Mammary epithelial cell (primary cell): ENCODE measurements at regions of chr12 and their contacts with region 1.

Region 1: DNA sequence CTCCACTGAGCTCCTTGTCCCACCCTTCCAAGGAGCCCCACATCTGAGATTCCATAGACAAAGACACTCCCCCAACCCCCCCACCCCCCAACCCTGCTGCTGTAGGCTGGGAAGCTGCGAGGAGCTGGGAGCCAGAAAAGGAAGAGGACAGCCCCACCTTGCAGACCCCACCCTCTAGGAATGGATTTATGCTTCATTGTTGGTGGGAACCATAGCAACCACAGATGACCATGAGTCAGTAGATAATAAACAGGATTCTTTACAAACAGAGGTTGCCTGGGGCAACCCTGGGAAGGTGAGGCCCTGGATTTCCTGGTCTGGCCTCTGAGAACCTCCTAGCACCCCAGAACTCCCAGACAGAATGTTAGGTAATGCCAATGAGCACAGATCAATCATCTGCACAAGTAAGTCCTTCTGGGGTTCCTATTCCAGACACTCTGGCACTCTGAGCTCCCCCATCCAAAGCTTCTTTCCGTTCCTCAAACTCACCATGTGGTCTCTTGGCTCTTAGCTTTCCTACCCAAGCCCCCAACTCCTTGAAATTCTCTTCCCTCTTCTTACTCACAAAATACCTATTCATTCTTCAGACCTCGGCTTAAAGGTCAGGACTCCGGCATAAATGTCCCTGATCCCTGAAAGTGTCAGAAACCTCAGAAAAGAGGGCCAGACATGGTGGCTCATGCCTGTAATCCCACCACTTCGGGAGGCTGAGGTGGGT is 15.2 kb upstream of the PLEKHG6 start:
- DNase-seq: peak; percentile 93
- H3K4me3 ChIP-seq: no peak overlapping the region
- H3K27ac ChIP-seq: peak overlapping the region; percentile 83
- H3K4me1 ChIP-seq: peaks cover 25% of the 10 kb centered on the region
- H3K27me3 ChIP-seq: no peaks in the 10 kb centered on the region
- CTCF ChIP-seq: no peak

Region 2: DNA sequence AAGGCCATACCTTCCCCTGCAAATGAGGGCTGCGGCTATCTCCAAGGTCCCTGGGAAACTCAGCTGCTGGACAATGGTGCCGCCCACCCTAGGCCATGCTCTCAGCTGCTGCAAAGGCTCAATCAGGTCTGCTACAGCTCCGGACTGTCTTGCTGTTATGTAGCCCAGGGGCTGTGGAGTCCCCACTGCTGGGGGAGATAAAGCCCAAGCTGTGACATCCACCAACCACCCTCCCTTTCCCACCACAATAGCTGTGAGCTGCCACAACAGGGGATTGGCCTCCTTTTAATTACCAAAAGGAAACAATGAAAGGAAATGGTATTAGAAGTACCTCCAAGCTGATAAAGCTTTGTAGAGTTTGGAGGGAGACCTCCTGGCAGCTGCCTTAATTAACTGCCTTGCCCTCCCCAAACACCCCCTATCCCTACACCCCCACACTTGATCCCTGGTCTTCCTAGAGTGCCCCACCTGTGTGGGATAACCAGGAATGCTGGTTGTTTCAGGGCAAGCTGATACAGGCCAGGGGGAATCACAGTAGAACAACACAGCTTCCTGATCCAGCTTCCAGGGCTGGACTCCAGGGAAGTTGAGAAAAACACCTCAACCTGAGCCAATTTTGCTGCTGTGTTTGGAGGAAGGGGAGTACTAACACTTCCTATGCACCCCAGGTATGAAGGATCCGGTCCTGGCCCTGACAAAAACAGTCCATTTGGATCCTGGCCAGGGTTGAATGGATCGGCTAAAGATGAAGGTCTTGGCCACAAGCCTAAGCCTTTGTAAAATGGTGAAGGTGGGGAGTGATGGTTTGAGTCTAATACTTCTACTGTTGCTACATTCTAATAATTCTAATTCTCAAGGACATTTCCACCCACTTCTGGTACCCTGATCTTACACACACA is 170.6 kb before region 1 on chr12 and contains the start of gene VWF:
- CTCF ChIA-PET with region 1: interaction called, 12 read pairs
- dilution Hi-C with region 1: no loop called
- in situ Hi-C with region 1: no loop called
- intact Hi-C with region 1: no loop called
- DNase-seq: no peak
- H3K4me3 ChIP-seq: no peak within 1 kb of the TSS
- H3K27ac ChIP-seq: no peak within 1 kb of the TSS
- H3K4me1 ChIP-seq: peaks cover 5% of the 10 kb centered on the region
- H3K27me3 ChIP-seq: peaks cover 3% of the 10 kb centered on the region
- CTCF ChIP-seq: no peak
- total RNA-seq, gene VWF: under 0.01 to 0.49 TPM

Region 3: GRCh38 chr12:6312529-6313325 is 17.5 kb after region 1 on chr12:
- CTCF ChIA-PET with region 1: no interaction called
- dilution Hi-C with region 1: no loop called
- in situ Hi-C with region 1: no loop called
- intact Hi-C with region 1: loop called (anchors 2 kb)
- DNase-seq: peak; percentile 96
- H3K4me3 ChIP-seq: no peak overlapping the region
- H3K27ac ChIP-seq: peak overlapping the region; percentile 54
- H3K4me1 ChIP-seq: peaks cover 37% of the 10 kb centered on the region
- H3K27me3 ChIP-seq: no peaks in the 10 kb centered on the region
- CTCF ChIP-seq: no peak